HCT116 (cell line): ENCODE measurements at regions of chr7 and their contacts with region 1.

Region 1: DNA sequence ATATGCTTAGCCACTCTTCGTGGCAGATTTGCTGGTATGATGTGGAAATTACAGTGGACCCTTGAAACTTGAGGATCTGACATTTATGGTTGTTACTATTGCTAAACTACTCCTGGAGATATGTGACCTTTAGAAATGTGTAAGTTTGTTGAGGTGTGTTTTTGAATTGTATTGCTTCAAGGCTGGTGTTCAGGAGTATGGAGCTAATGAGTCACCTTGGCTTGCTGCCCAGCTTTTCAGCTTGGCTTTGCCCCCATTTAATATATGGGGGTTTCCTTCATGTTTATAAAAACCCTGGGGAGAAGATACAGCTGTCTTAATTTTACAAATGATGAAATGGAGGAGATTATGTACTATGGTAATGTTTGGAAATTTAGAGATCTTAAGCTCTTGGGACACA is 11.6 kb downstream of the HBP1 start:
- DNase-seq: peak; percentile 64
- ATAC-seq: peak; percentile 70
- H3K4me3 ChIP-seq: peak overlapping the region in 1 of 2 experiments; percentile 7; a peak in 1 of 4 replicates
- H3K27ac ChIP-seq: peak overlapping the region; percentile 81; the same call in 1 of the 2 replicates
- H3K4me1 ChIP-seq: peaks cover 28 to 30% of the 10 kb centered on the region in 2 experiments
- H3K27me3 ChIP-seq: no peaks in the 10 kb centered on the region
- CTCF ChIP-seq: no peak
- POLR2A ChIP-seq: no peak
- RAD21 ChIP-seq: 0 out of 2 replicates have a peak, but pooled peaks have one; percentile 3

Region 2: GRCh38 chr7:107007007-107007891 is 173.1 kb before region 1 on chr7:
- CTCF ChIA-PET with region 1: no interaction called
- POLR2A ChIA-PET with region 1: no interaction called
- RAD21 ChIA-PET with region 1: no interaction called
- intact Hi-C with region 1: no loop called
- DNase-seq: no peak
- ATAC-seq: no peak
- H3K4me3 ChIP-seq: no peak overlapping the region
- H3K27ac ChIP-seq: no peak overlapping the region
- H3K4me1 ChIP-seq: no peaks in the 10 kb centered on the region
- H3K27me3 ChIP-seq: no peaks in the 10 kb centered on the region
- CTCF ChIP-seq: no peak
- POLR2A ChIP-seq: no peak
- RAD21 ChIP-seq: no peak

Region 3: DNA sequence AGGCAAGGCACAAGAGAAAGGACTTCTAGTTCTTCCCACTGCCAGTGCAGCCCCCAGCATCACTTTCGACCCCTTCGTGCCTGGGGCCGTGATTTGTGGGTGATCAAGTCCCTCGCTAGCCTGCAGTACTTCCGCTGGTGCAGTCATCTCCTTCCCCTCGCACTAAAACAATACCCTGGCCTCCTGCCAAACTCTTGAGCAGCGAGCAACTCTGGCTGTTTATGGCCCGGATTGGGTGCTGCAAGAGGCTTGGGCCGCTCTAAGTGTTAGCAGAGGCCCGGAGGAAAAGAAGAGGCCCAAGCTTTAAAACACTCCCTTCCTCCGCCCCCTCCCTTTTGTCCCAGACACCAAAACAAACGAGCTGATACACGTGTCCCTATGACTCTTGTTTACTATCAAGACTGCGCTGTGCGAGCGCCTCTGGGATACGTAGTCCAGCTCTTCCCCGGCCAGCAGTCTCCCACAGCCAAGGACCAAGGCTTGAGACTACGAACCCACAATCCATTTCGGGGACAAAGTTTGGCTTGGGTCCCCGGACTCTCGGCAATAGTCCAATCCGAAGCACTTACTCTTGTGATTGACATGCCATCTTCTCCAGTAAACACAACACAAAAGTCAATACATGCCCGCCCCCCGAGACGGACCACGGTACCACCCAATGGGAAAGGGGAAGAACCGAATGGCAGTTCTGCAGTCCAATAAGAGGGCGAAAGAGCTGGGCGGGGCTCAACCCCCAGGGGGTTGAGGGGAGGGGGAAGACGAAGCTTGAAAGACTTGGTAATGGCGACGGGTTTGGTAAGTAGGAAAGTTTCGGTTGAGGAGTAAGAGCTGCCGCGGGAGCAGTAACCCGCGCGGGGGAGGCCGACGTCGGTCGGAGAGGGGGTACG is 11.9 kb before region 1 on chr7 and contains the start of gene HBP1:
- CTCF ChIA-PET with region 1: interaction called, 3 read pairs
- POLR2A ChIA-PET with region 1: interaction called, 11 read pairs
- RAD21 ChIA-PET with region 1: no interaction called
- intact Hi-C with region 1: no loop called
- DNase-seq: peak; percentile 100
- ATAC-seq: peak; percentile 88
- H3K4me3 ChIP-seq: peak within 1 kb of the TSS; percentile 70 to 75
- H3K27ac ChIP-seq: peak within 1 kb of the TSS; percentile 67
- H3K4me1 ChIP-seq: peaks cover 5 to 18% of the 10 kb centered on the region in 2 experiments; a peak in 3 of 4 replicates
- H3K27me3 ChIP-seq: no peaks in the 10 kb centered on the region
- CTCF ChIP-seq: no peak
- POLR2A ChIP-seq: no peak
- RAD21 ChIP-seq: no peak
- total RNA-seq, gene HBP1: 24.3 TPM

Region 4: DNA sequence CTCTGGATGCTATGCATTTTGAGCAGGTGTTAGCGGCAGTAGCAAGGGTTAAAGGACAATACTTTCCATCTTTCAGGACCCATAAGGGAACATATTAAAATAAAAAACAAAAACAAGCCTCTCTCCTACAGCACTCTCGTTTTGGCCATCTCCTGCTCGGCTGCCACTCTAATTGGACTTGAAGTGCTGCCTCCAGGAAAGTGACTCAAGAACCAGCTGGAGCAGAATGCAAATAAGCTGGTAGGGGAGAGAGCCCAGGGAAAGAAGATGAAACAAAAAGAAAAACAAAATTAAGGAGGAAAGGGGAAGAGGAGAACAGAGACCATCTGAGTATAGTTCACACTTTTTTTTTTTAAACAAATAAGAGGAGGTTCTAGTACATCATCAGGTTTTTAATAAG is 54.1 kb after region 1 on chr7:
- CTCF ChIA-PET with region 1: no interaction called
- POLR2A ChIA-PET with region 1: no interaction called
- RAD21 ChIA-PET with region 1: no interaction called
- intact Hi-C with region 1: no loop called
- DNase-seq: no peak
- ATAC-seq: no peak
- H3K4me3 ChIP-seq: no peak overlapping the region
- H3K27ac ChIP-seq: no peak overlapping the region
- H3K4me1 ChIP-seq: peaks cover 0 to 3% of the 10 kb centered on the region in 2 experiments; a peak in 1 of 4 replicates
- H3K27me3 ChIP-seq: no peaks in the 10 kb centered on the region
- CTCF ChIP-seq: no peak
- POLR2A ChIP-seq: no peak
- RAD21 ChIP-seq: no peak